Posterior vena cava (tissue), 2 donors: ENCODE measurements at regions of chr4 and their contacts with region 1.

Region 1: GRCh38 chr4:103099691-103100392 is at the start of gene BDH2:
- DNase-seq: no peak
- total RNA-seq, gene BDH2: 40.1 to 41.2 TPM

Region 2: DNA sequence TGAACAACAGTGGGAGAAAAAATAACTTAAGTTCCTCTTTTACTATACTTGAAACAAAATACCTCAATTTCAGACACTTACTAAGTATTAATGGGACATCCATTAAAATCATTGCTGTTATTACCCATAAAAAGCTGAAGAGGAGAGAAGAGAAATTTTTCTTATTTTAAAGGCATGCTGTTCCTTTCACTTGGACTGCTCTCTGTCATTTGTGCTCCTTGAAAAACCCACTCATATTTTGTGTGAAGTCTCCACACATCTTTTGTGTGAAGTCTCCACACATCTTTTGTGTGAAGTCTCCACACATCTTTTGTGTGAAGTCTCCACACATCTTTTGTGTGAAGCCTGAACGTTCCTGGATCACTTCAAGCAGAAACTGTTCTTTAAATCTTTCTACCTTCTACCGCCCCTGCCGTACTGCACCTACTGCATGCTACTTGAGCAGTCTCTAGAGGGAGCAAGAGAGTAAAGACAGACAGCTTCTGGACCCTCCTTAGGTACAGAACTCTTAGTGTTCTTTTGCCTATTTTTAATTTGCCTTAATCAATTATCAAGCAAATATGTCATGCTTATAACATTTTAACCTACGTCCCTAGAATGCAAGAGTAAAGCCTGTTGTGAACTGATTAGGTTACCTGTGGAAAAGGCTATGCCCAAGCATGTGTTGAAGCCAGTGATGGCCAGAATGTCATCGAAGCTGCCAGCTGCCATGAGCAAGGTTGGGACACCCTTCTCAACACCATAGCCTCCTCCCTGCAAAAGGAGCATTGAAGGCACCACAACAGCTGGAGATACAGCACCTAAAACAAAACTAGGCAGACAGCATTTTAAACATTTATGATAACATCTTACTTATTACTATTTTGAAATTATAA is 53.2 kb before region 1 on chr4:
- intact Hi-C with region 1: loop called in 1 of 2 experiments (anchors 10 kb)
- DNase-seq: no peak

Region 3: DNA sequence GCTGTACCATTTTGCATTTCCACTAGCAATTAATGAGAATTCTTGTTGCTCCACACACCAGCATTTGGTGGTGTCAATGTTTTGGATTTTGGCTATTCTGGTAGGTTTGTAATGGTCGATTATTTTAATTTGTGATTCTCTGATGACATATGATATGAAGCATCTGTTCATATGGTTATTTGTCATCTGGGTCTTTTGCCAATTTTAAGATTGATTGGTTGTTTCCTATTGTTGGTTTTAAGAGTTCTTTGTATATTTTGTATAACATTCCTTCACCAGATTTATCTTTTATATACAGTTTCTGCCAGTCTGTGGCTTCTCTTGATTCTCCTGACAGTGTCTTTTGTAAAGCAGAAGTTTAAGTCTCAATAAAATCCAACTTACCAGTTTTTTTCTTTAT is 18.3 kb after region 1 on chr4:
- intact Hi-C with region 1: no loop called
- DNase-seq: no peak